Esophagus muscularis mucosa (tissue), 4 donors: ENCODE measurements at regions of chr5 and their contacts with region 1.

Region 1: DNA sequence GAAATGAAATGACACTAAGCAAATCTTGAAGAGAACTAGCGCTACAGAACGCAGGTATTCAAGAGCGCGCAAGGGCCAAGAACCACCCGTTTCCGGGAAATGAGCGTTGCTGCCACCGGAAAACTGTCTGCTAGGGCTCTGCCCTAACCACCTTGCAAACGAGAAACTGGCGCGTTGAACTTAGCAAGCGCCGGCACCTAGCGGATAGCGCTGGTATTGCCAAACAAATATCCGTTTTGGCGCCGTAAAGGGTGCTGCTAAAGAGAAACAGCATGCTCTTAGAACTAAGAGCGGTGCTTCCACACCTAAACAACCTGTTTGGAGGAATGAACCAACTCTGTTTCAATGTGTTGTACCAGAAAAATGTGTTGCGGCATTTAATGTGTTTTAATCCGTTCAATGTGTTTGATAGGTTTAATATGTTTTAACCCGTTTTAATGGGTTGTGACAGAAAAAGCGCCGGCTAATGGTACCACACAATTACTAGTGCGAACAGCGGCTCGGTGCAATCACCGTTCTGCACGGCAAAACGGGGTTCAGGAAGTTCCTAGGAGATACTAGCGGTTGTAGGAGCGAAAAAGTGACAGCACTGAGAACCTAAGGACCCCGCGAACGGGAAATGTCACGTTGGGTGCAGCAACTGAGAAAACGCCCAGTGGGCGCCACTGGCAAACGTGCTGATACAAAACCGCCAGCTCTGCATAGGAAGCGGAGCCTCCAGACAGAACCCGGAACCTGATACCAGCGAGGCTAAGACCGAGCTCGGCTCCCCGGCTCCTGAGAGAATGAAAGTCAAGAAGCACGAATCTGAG is at the start of gene ANXA2R:
- DNase-seq: no peak
- H3K4me3 ChIP-seq: peak within 1 kb of the TSS; percentile 57 to 69 (median 61)
- H3K27ac ChIP-seq: peak within 1 kb of the TSS; percentile 84 to 93 (median 86)
- H3K4me1 ChIP-seq: peaks cover 15 to 60% (median 57%) of the 10 kb centered on the region in 4 donors
- H3K27me3 ChIP-seq: peaks cover 4 to 81% (median 41%) of the 10 kb centered on the region in 4 donors
- CTCF ChIP-seq: peak; percentile 57 to 73 (median 70)
- EP300 ChIP-seq: no peak
- POLR2A ChIP-seq: no peak
- total RNA-seq, gene ANXA2R: 1.5 to 4.2 (median 2.0) TPM

Region 2: GRCh38 chr5:42908509-42909488 is 131.7 kb before region 1 on chr5:
- intact Hi-C with region 1: loop called (anchors 10 kb)
- DNase-seq: peak; percentile 93
- H3K4me3 ChIP-seq: peak overlapping the region; percentile 52 to 57 (median 54)
- H3K27ac ChIP-seq: no peak overlapping the region
- H3K4me1 ChIP-seq: peaks cover 4 to 11% (median 8%) of the 10 kb centered on the region in 4 donors
- H3K27me3 ChIP-seq: peaks cover 0 to 16% (median 0%) of the 10 kb centered on the region in 4 donors
- CTCF ChIP-seq: peak; percentile 77 to 87 (median 81)
- EP300 ChIP-seq: no peak
- POLR2A ChIP-seq: no peak

Region 3: GRCh38 chr5:42950440-42951292 is 89.8 kb before region 1 on chr5:
- intact Hi-C with region 1: loop called (anchors 10 kb)
- DNase-seq: no peak
- H3K4me3 ChIP-seq: peak overlapping the region; percentile 51 to 63 (median 55)
- H3K27ac ChIP-seq: peak overlapping the region; percentile 74 to 89 (median 83)
- H3K4me1 ChIP-seq: peaks cover 24 to 43% (median 40%) of the 10 kb centered on the region in 4 donors
- H3K27me3 ChIP-seq: peaks cover 0 to 99% (median 61%) of the 10 kb centered on the region in 4 donors
- CTCF ChIP-seq: no peak
- EP300 ChIP-seq: no peak
- POLR2A ChIP-seq: no peak

Region 4: GRCh38 chr5:42992091-42992879 is 48.2 kb before region 1 on chr5:
- intact Hi-C with region 1: loop called (anchors 2 kb)
- DNase-seq: peak; percentile 96
- H3K4me3 ChIP-seq: peak overlapping the region; percentile 58 to 65 (median 60)
- H3K27ac ChIP-seq: peak overlapping the region; percentile 77 to 93 (median 88)
- H3K4me1 ChIP-seq: peaks cover 12 to 27% (median 19%) of the 10 kb centered on the region in 4 donors
- H3K27me3 ChIP-seq: peaks cover 0 to 82% (median 58%) of the 10 kb centered on the region in 4 donors
- CTCF ChIP-seq: no peak
- EP300 ChIP-seq: no peak
- POLR2A ChIP-seq: peak; percentile 20

Region 5: DNA sequence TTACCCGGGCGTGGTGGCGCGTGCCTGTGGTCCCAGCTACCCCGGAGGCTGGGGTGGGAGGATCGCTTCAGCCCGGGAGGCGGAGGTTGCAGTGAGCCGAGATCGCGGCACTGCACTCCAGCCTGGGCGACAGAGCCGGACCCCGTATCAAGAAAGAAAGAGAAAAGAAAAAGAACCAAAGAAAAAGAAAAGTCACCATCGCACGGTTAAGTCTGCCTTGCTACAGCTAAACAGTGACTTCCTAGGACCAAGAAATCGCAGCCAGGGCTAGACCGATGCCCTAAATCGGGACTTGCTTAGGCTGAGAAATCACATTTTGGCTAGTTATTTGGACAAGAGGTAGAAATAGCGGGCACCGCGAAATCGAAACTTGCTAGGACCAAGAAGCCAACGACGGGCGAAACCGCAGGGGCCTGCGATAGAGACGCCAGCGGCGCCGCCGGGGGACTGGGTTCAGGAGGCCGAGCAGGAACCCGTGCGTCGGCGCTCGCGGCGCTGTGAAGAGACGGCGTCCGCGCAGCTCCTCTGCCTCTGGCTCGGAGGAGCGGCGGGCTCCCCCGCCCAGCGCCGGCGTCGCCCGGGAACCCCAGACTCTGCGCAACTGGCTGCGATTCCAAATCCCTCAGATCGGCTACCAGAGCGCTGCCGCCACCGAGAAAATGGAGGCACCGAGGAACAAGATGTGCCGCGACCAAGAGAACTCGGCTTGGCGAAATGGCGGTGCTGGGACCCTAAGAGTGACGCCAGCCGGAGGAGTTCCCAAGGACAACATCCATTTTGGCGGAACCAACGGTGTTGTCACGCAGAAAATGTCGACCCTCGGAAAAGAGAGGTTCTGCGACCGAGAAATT is 25.7 kb after region 1 on chr5:
- intact Hi-C with region 1: loop called (anchors 1 kb)
- DNase-seq: peak; percentile 94
- H3K4me3 ChIP-seq: peak overlapping the region; percentile 77 to 89 (median 86)
- H3K27ac ChIP-seq: peak overlapping the region; percentile 97 to 99 (median 98)
- H3K4me1 ChIP-seq: peaks cover 22 to 47% (median 37%) of the 10 kb centered on the region in 4 donors
- H3K27me3 ChIP-seq: no peaks in the 10 kb centered on the region
- CTCF ChIP-seq: no peak
- EP300 ChIP-seq: no peak
- POLR2A ChIP-seq: no peak